GM18951 (cell line): ENCODE measurements at regions of chr1 and their contacts with region 1.

Region 1: DNA sequence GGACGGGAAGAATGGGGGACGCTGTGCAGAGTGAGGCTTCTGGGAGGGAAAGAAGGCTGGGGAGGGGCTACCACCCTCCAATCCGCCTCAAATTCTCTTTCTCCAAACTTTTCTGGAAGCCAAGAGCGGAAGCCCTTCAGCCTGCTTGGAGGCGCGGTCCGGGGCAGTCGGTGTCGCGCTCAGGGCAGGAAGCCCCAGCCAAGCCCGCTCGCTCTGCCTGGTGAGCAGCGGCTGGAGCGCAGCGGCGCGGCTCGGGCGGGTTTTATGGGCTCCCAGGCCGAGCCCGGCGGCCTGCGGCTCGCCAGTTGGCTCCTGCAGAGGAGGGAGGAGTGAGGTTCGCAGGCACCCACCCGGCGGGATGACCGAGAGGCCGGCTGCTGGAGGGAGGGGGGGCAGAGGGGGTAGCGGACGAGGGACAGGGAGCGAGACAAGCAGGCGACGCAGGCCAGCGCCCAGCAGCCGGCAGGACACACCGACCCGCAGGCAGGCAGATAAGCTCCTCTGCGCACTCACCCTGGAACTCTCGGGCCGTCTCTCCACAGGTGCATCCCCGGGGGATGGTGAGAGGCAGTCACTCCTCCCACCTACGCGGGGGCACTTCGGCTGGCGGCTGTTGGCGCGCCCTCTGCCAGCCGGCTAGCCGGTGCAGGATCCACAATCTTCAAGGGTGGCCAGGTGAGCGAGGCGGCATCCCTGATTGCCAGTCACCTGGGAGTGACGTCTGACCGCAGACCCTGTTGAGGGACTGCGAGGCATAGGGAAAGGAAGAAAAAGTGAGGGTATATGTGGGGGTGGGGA is at the start of gene AVPR1B:
- POLR2A ChIP-seq: no peak

Region 2: GRCh38 chr1:205543411-205544301 is 573.7 kb before region 1 on chr1:
- in situ Hi-C with region 1: no loop called
- POLR2A ChIP-seq: no peak

Region 3: GRCh38 chr1:205791568-205792180 is 325.7 kb before region 1 on chr1:
- in situ Hi-C with region 1: loop called (anchors 10 kb)
- POLR2A ChIP-seq: no peak

Region 4: DNA sequence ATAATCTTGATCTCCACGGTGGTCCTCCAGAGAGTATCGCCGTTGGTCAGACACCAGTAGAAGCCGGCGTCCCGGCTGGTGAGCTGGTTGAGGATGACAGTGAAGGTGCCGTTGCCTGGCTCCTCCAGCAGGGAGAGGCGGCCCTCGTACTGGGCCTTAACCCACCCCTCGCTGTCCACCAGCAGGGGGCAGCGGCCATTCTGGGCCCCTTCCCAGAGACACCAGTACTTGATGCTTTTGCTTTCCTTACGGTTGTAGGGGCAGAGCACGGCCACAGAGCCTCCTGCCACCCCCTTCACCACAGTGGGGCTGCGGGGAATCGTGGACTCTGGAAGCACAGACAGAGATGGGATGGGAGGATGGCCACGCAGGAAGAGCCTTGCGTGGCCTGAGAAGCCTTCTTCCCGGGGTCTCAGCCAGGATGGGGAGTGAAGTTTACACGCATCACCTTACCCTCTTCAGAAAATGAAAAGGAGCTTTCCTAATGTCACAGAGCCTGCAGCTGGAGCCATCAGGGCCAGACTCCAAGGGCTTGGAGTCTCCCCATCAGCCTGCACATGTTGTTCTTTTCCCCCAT is 818.2 kb after region 1 on chr1:
- in situ Hi-C with region 1: no loop called
- POLR2A ChIP-seq: no peak